ENCODE measurements at regions of chr2 and their contacts with region 1.

Region 1: GRCh38 chr2:121649596-121650314 is 493 bp upstream of the CLASP1 start:
- DNase-seq: peak; percentile 95 to 98
- ATAC-seq: peak; percentile 99
- H3K4me3 ChIP-seq: peak overlapping the region; percentile 88 to 89
- H3K27ac ChIP-seq: peak overlapping the region; percentile 84 to 95
- H3K4me1 ChIP-seq: peaks cover 0 to 2% of the 10 kb centered on the region in 2 donors
- H3K27me3 ChIP-seq: no peaks in the 10 kb centered on the region

Region 2: DNA sequence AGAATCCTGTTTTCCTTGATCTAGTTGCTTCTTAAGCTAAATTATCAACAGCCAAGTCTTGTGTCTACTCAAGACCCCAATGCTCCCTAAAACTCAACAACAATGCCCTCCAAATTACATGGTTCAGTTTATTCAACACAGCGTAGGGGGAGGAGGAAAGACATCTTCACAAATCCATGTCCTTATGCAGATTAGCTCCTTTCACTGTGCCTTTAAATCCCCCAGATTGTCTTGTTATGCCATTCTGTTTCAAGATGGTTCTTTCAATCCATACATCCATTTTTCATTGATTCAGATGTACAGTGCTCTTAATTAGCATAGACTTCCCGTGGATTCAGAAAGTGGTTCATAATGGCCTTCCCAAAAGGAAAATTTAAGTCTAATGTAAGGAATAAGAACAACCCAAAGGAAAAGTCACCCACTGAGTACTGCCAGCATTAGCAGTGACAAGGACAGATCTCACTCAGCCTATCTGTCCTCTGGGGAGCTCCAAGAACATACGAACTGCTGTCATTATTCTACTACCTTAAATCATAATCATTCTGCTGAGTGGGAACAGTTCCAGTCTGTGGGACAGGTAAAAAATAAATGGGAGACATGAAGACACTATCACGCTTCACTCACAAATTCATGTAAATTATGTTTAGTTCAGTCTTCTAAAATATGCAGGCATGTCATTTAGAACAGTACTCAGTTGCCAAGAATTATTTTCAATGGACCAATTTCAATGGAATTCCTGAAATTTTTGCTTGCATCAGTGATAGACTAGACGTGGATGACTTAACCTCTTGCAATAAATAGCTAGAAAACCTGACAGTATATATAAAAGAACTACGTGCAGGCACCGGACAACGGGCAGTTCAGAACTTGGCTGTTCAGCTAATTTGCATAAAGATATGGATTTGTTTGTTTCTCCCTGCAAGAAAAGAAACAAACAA is 178.0 kb before region 1 on chr2:
- intact Hi-C with region 1: no loop called
- DNase-seq: no peak
- ATAC-seq: no peak
- H3K4me3 ChIP-seq: no peak overlapping the region
- H3K27ac ChIP-seq: no peak overlapping the region
- H3K4me1 ChIP-seq: peaks cover 5 to 6% of the 10 kb centered on the region in 2 donors
- H3K27me3 ChIP-seq: no peaks in the 10 kb centered on the region

Region 3: GRCh38 chr2:121530212-121530705 is 119.5 kb before region 1 on chr2:
- intact Hi-C with region 1: loop called (anchors 1 to 2 kb)
- DNase-seq: peak; percentile 88 to 94
- ATAC-seq: peak; percentile 94
- H3K4me3 ChIP-seq: peak overlapping the region; percentile 59 to 72
- H3K27ac ChIP-seq: peak overlapping the region; percentile 97 to 99
- H3K4me1 ChIP-seq: no peaks in the 10 kb centered on the region
- H3K27me3 ChIP-seq: peaks cover 0 to 2% of the 10 kb centered on the region in 2 donors

Region 4: GRCh38 chr2:121570036-121570666 is 79.6 kb before region 1 on chr2:
- intact Hi-C with region 1: loop called in 1 of 2 experiments (anchors 10 kb)
- DNase-seq: no peak
- ATAC-seq: no peak
- H3K4me3 ChIP-seq: no peak overlapping the region
- H3K27ac ChIP-seq: no peak overlapping the region
- H3K4me1 ChIP-seq: peaks cover 2 to 12% of the 10 kb centered on the region in 2 donors
- H3K27me3 ChIP-seq: no peaks in the 10 kb centered on the region

Region 5: GRCh38 chr2:121626777-121627524 is 22.8 kb before region 1 on chr2:
- intact Hi-C with region 1: no loop called
- DNase-seq: no peak
- ATAC-seq: no peak
- H3K4me3 ChIP-seq: no peak overlapping the region
- H3K27ac ChIP-seq: no peak overlapping the region
- H3K4me1 ChIP-seq: no peaks in the 10 kb centered on the region
- H3K27me3 ChIP-seq: no peaks in the 10 kb centered on the region

Region 6: DNA sequence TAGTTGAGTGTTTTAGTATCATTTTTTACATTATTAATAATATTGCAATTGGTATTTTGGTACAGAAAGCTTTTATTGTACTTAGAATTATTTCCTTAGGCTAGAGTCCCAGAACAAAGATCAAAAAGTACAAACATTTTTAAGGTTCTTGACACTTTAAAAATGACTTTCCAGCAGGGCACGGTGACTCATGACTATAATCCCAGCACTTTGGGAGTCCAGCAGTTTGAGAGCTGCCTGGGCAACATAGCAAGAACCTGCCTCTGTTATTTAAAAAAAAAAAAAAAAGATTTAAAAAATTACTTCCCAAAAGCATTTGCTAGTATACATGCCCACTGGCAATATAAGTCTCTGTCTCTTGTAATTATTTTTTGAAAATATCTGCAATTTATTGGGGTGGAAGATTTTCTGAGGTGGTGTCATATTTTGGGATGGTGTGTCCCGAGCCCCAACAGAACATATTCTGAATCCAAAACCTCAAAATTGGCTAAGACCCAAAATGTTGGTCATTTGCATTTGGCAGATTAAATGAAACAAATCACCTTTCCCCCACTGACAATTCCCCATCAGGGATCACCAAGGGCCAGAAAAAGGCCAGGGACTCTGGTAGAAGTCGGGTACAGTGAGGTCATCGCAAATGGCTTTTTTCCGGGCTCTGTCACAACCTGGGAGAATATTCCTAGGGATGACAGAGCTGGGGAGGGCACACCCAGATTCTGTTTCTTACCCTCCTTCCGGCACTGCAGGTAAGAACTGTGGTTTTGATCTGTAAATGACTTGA is 44.8 kb after region 1 on chr2:
- intact Hi-C with region 1: loop called in 1 of 2 experiments (anchors 5 kb)
- DNase-seq: peak in 1 of 2 donors; percentile 27
- ATAC-seq: peak; percentile 57
- H3K4me3 ChIP-seq: no peak overlapping the region
- H3K27ac ChIP-seq: peak overlapping the region in 1 of 2 donors; percentile 73
- H3K4me1 ChIP-seq: no peaks in the 10 kb centered on the region
- H3K27me3 ChIP-seq: no peaks in the 10 kb centered on the region

Region 7: DNA sequence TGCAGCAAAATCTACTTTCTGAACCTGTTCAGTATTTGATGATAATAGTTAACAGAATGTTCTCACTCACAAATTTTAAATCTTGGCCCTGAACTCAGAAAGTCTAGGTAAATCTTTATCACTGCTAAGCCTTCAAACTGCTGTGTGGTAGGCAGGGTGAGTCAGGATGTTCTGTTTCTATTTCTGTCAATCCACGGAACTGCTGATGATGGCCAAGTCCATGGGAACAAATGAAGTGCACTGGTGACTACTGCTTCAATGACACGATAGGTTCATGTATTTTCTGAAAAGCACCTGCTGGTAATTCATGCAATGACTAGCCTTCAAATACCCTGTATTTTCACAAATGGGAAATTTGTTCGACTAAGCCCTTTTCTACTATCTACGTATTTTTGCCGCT is 72.7 kb after region 1 on chr2:
- intact Hi-C with region 1: loop called in 1 of 2 experiments (anchors 2 kb)
- DNase-seq: no peak
- ATAC-seq: no peak
- H3K4me3 ChIP-seq: no peak overlapping the region
- H3K27ac ChIP-seq: no peak overlapping the region
- H3K4me1 ChIP-seq: peaks cover 0 to 4% of the 10 kb centered on the region in 2 donors
- H3K27me3 ChIP-seq: no peaks in the 10 kb centered on the region